Activated naive CD4-positive, alpha-beta T cell treated with anti-CD3 and anti-CD28 coated beads, Interleukin-2, amount 10 ng/mL, durations not matched to agents 7 days and 5 days (primary cell): ENCODE measurements at regions of chr5 and their contacts with region 1.

Region 1: DNA sequence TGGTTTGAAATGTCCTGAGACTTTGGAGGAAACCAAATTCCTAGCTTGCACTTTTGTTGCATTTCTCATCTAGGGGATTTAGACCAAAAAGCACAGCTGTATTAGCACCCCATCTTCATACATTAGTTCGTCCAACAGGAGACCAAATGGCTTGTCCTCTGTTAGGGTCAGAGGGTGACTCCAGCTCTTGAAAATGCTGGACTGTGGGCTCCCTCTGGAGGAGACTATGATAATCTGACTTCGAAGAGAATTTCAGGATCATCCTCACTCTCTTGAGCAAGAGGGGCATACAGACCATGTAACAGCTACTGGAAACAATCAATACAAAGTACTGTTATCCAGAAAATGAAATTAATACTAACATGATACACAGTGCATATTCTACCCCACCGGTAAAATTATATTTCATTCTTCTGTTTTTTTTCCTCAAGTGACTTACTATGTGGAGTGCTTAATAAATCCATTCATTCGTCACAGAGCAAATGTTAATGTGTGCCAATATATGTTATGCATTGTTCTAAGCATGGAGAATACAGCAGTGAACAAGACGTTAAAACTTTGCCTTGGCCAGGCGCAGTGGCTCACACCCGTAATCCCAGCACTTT is 63.7 kb upstream of the PPP2CA start:
- DNase-seq: peak; percentile 50
- H3K4me3 Mint-ChIP-seq: no peak overlapping the region
- H3K27ac Mint-ChIP-seq: no peak overlapping the region
- H3K4me1 Mint-ChIP-seq: no peaks in the 10 kb centered on the region
- H3K27me3 Mint-ChIP-seq: peaks cover 49% of the 10 kb centered on the region

Region 2: GRCh38 chr5:134092878-134093277 is 196.7 kb before region 1 on chr5:
- CTCF ChIA-PET with region 1: no interaction called
- DNase-seq: no peak
- H3K4me3 Mint-ChIP-seq: no peak overlapping the region
- H3K27ac Mint-ChIP-seq: peak overlapping the region; percentile 74
- H3K4me1 Mint-ChIP-seq: peaks cover 79% of the 10 kb centered on the region
- H3K27me3 Mint-ChIP-seq: peaks cover 36% of the 10 kb centered on the region

Region 3: DNA sequence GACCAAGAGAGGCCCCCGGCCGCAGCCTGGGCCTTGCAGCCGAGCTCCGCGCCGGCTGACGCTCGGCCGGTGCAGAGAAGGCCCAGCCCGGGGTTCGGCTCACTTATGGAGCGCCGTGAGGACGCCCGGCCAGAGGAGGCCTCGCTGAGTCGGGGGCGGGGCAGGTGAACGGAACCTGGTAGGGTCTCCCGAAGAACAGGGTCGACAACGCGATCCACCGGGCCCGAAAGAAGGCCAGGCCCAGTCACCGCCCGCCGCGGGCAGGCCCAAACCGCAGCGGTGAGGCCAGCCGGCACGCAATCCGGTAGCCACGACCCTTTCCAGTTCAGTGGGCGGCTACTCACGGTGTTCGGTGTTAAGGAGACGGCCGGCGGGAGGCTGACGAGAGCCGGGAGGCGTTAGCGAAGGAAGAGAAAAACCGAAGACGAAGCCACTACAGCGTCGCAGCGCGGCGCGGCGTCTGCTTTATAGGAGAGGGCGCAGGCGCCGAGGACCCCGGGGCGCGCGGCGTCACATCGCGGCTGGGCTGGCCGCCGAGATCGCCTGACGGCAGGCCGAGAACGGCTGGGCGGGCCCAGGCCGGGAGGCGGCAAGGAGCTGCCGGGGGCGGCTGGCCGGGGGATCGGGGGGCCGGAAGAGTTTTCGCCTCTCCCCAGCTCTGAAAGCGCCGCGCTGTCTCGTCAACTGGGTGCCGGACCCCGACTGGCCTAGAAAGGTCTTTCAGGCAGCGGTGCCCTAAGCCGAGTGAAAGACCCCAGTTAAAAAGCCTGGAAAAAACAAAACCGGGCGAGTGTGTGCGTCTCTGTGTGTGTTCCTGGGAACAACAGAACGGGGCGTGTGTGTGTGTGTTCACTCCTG is 112.9 kb before region 1 on chr5 and contains the start of gene SKP1:
- CTCF ChIA-PET with region 1: interaction called, 84 read pairs
- DNase-seq: peak; percentile 87
- H3K4me3 Mint-ChIP-seq: peak within 1 kb of the TSS; percentile 97
- H3K27ac Mint-ChIP-seq: peak within 1 kb of the TSS; percentile 99
- H3K4me1 Mint-ChIP-seq: peaks cover 29% of the 10 kb centered on the region
- H3K27me3 Mint-ChIP-seq: peaks cover 22% of the 10 kb centered on the region